Natural killer cell (primary cell): ENCODE measurements at regions of chr5 and their contacts with region 1.

Region 1: DNA sequence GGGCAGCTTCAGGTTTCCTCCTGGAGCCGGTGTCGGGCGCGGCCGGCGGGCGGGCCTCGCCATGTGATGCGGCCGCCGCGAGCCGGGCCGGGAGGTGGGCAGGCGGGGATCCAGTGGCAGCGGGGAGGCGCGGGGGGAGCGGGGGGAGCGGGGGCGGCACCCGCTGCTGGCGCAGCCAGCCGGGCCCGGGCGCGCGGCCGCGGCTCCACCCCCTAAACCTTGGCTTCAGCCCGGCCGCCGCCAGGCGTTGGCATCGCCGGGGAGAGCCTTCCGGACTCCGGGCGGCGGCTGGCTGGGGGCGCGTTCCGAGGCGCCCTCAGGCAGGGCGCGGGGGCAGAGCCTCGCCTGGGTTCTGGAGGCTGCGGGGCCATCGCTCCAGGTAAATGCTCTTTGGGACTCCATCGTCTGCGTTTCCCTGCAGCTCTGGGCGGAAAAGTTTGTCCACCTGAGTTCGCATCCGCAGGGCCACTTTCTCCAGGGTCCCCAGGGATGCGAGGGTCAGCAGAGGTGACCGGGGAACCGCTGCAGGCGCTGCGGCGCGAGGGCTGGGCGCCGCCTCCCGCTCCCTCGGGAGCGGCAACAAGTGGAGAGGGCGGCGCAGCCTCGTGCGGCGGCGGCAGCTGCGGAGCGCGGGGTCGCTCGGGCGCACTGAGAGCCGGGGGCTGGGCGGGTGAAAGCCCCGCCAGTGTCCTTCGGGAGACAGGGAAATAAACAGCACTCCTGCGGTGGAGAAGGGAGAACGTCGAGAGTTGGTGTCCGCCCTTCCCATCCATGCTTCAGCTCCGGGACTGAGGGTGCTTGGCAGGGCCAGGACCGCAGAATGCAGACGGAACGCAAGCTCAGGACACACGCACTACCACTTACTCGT is at the start of gene ARHGEF28:
- DNase-seq: peak; percentile 48 to 63
- ATAC-seq: peak; percentile 88 to 95 (median 93)
- H3K4me3 ChIP-seq: peak within 1 kb of the TSS; percentile 34
- H3K4me3 Mint-ChIP-seq: peak within 1 kb of the TSS; percentile 84
- H3K27ac ChIP-seq: no peak within 1 kb of the TSS
- H3K27ac Mint-ChIP-seq: no peak within 1 kb of the TSS
- H3K4me1 ChIP-seq: peaks cover 11% of the 10 kb centered on the region
- H3K4me1 Mint-ChIP-seq: peaks cover 0 to 4% of the 10 kb centered on the region in 2 donors
- H3K27me3 ChIP-seq: peaks cover 18% of the 10 kb centered on the region
- H3K27me3 Mint-ChIP-seq: peaks cover 23 to 31% of the 10 kb centered on the region in 2 donors
- CTCF ChIP-seq: no peak
- total RNA-seq, gene ARHGEF28: 2.3 to 7.1 (median 5.8) TPM

Region 2: DNA sequence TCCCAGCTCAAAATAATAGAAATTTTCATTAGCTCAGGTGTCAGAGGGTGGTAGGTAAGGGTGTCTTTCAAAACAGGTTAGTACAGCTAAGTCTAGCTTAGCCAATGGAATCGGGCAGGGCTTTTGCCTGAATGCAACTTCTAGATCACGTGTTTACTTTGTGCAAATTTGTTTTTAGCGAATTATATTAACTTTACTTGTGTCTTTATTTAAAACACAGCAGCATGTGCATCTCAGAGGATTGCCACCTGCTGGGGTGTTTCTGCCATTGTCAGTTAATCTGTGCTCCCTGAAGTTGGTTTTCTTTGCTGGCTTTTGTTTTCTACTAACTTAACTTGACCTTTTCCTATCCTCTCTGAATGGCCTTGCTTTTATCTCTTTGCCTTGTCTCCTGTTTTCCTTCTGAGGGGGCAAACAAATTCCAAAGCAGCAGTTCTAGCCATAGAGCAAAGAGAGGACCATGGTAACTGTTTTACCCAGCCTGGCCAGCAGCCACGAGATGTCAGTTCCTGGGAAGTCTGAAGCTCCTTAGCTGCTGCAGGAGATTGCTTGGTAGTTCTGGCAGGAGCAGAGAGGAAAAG is 67.4 kb after region 1 on chr5:
- intact Hi-C with region 1: loop called (anchors 10 kb)
- DNase-seq: peak in 1 of 2 donors; percentile 35
- ATAC-seq: peak in 2 of 3 donors; percentile 19 to 21
- H3K4me3 ChIP-seq: no peak overlapping the region
- H3K4me3 Mint-ChIP-seq: peak overlapping the region; percentile 80
- H3K27ac ChIP-seq: peak overlapping the region; percentile 79
- H3K27ac Mint-ChIP-seq: peak overlapping the region; percentile 81 to 88
- H3K4me1 ChIP-seq: peaks cover 32% of the 10 kb centered on the region
- H3K4me1 Mint-ChIP-seq: peaks cover 50 to 58% of the 10 kb centered on the region in 2 donors
- H3K27me3 ChIP-seq: no peaks in the 10 kb centered on the region
- H3K27me3 Mint-ChIP-seq: peaks cover 0 to 3% of the 10 kb centered on the region in 2 donors
- CTCF ChIP-seq: peak; percentile 37